Adrenal gland (tissue), 19 donors: ENCODE measurements at regions of chr20 and their contacts with region 1.

Region 1: DNA sequence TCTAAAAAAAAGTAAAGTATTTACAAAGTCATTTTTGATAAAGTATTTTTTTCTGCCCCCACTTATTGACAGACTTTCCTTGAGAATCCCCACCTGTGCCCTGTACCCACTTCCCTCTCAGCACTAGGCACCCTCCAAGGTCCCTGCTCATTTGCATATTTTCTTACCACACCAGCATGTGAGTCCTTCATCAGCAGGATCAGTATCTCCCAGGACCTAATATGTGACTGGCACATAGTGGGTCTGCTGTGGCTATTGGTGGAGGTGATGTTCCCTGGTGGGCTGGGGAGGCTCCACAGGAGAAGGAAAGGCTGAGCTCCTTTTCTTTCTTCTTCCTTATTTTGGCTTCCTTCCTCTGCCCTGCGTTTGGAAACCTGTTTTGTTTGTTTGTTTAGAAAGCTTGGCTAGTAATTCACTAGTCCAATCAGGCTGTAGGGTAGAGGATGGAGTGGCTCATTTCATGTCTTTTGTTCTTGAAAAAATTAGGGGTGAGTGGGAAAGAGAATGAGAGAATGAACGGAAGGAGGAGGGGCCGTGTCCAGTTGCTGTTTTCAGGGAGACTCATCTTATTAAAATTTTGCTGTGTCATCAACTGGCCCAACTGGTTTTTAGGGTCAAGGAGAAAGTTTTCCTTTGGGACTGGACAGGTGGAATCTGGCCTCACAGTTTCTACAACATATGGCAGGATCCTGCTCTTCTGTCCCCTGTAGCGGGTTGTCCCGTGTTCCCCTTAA is 2.8 kb upstream of the RNF24 start:
- DNase-seq: no peak
- H3K4me3 ChIP-seq: no peak overlapping the region
- H3K27ac ChIP-seq: no peak overlapping the region
- H3K4me1 ChIP-seq: peaks cover 0 to 13% of the 10 kb centered on the region in 2 donors
- H3K27me3 ChIP-seq: no peaks in the 10 kb centered on the region
- CTCF ChIP-seq: no peak
- POLR2A ChIP-seq: no peak

Region 2: DNA sequence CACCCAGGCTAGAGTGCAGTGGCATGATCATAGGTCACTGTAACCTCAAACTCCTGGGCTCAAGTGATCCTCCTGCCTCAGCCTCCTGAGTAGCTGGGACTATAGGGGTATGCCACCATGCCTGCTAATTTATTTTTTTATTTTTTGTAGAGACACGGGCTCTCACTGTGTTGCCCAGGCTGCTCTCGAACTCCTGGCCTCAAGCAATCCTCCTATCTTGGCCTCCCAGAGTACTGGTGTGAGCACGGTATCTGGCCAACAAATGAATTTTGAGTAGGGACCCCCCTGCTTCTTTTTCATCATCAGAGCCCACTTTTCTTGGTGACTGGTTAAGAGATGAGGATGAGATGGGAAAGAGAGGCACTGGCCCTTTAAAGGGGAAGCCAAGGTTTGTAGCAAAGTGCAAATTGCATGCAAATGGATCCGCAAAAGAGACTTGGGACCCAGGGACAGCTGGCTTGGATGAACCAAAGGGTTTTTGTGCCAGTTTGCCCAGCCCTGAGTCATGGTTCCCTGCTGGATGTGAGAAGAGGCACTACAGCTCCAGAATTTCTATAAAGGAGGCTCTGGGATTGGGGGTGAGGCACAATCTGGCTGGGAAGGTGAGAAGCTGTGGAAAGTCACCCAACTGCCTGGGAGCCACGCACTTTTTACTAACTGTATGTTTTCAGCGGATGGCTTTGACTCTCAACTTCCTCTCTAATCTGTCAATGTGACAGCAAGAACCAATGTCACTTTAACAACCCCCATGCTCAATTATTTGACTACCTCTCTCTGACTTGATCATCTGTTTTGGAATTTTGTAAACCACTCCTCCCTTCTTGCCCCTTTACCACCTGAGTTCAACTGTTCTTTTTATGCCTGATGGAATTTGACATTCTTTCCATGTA is 55.9 kb after region 1 on chr20:
- intact Hi-C with region 1: loop called in 1 of 2 experiments (anchors 5 kb)
- DNase-seq: peak in 2 of 7 donors; percentile 12 to 46
- H3K4me3 ChIP-seq: no peak overlapping the region
- H3K27ac ChIP-seq: no peak overlapping the region
- H3K4me1 ChIP-seq: peaks cover 0 to 8% of the 10 kb centered on the region in 2 donors
- H3K27me3 ChIP-seq: no peaks in the 10 kb centered on the region
- CTCF ChIP-seq: no peak
- POLR2A ChIP-seq: no peak

Region 3: DNA sequence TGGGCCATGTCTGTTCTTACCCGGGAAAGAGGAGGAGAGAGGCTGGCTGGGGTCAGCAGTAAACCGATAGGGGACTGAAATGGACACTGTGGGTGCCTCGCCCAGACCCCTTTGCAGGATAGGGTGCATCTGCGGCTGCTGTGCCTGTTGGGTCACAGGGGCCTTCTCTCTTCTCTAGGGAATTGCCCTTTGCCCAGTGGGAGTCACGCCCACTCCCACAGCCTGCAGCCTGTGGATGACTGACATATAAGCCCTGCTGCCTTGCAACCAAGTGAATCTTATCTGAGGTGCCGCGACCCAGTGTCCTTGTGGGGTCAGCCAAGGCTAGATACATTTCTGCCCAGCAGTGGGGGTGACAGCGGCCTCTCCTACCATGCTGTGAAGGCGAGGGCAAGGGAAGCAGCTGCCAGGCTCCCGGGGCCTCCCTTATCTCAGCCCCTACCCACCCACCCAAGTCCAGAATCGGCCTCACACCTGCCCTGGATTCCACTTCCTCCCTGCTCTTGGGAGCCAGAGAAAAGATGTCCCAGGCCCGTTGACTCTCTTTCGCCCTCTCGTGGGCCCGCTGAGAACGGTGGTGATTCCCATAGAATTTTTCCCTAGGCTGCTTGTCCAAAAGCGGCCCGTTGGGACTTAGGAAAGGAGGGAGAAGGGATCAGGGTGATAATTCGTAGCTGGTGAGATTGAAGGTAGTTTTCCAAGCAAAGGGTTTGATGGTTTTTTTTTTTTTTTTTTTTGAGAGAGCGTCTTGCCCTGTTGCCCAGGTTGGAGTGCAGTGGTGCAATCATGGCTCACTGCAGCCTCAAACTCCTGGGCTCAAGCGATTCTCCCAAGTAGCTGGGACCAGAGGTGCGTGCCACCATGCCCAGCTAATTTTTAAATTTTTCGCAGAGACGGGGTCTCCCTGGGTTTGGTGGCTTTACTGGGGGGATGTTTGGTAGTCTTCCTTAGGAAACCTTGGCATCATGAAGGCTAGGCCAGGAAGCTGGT is 73.6 kb after region 1 on chr20:
- intact Hi-C with region 1: loop called in 1 of 2 experiments (anchors 5 kb)
- DNase-seq: peak; percentile 60 to 83 (median 69)
- H3K4me3 ChIP-seq: no peak overlapping the region
- H3K27ac ChIP-seq: peak overlapping the region in 2 of 5 donors; percentile 7 to 73
- H3K4me1 ChIP-seq: no peaks in the 10 kb centered on the region
- H3K27me3 ChIP-seq: no peaks in the 10 kb centered on the region
- CTCF ChIP-seq: peak; percentile 50 to 73 (median 64)
- POLR2A ChIP-seq: no peak

Region 4: DNA sequence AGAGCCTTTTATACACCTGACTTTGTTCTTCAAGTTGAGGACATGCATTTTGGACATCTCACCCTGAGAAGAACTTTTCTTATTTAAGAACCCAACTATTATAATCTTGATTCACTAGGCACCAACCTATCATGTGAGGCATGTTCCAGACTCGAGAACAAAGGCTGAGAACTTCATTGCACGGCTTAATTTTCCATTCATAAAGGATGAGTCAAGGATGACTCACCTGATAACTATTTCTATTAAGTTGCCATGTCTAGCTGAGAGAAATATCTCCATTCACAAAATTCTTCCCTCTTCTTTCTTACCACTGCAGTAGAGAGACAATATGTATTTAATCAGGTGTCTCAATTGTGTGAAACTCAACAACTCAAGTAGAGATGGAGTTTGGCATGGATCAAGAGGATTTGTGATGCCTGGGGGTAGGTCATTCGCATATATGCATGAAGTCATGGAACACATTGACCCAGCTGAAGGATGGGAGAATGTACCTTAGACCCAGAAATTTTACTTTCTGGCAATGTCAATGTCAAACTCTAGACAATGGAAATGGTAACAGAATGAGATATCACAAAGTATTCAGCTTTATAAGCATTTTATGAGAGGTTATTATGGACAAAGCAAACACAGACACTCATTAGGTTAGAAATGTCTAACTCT is 494.8 kb after region 1 on chr20:
- intact Hi-C with region 1: no loop called
- DNase-seq: peak in 4 of 7 donors; percentile 19 to 33 (median 24)
- H3K4me3 ChIP-seq: no peak overlapping the region
- H3K27ac ChIP-seq: no peak overlapping the region
- H3K4me1 ChIP-seq: peaks cover 0 to 11% of the 10 kb centered on the region in 2 donors
- H3K27me3 ChIP-seq: no peaks in the 10 kb centered on the region
- CTCF ChIP-seq: no peak
- POLR2A ChIP-seq: no peak